Heart left ventricle (tissue), 16 donors: ENCODE measurements at regions of chr22 and their contacts with region 1.

Region 1: GRCh38 chr22:27804470-27805297 is 3.1 kb upstream of the MN1 start:
- DNase-seq: peak; percentile 71 to 82 (median 74)
- ATAC-seq: peak in 3 of 4 donors; percentile 57 to 68 (median 67)
- H3K4me3 ChIP-seq: no peak overlapping the region
- H3K27ac ChIP-seq: no peak overlapping the region
- H3K4me1 ChIP-seq: peaks cover 0 to 38% (median 16%) of the 10 kb centered on the region in 12 donors
- H3K27me3 ChIP-seq: peaks cover 0 to 28% (median 4%) of the 10 kb centered on the region in 9 donors
- CTCF ChIP-seq: peak; percentile 54 to 81 (median 75)
- POLR2A ChIP-seq: no peak

Region 2: DNA sequence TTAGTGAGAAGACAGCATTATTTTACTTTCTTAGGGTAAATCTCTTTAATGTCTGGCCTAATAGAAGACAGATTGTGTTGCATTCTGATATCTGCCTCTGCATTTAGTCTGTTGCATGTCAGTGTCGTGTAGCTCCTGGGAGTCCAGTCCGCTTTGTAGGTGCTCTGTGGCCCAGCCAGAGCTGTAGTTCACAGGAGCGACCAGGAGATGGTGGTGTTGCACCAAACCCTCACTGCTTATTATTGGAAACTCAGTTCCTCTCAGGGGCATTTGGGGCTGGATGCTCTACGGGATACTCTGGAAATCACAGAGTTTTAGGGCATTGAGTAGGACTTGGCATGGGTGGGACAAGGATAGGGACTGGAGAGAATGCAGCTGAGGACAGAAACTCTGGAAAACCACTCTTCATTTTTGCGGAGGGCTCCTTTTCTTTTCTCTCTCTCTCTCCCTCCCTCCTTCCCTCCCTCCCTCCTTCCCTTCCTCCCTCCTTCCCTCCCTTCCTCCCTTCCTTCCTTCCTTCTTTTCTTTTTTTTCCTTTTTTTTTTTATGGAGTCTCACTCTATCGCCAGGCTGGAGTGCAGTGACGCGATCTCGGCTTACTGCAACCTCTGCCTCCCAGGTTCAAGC is 1125.6 kb before region 1 on chr22:
- intact Hi-C with region 1: loop called in 6 of 10 experiments (anchors 5 to 10 kb)
- DNase-seq: peak; percentile 65 to 82 (median 67)
- ATAC-seq: peak; percentile 49 to 88 (median 80)
- H3K4me3 ChIP-seq: no peak overlapping the region
- H3K27ac ChIP-seq: no peak overlapping the region
- H3K4me1 ChIP-seq: peaks cover 0 to 30% (median 10%) of the 10 kb centered on the region in 12 donors
- H3K27me3 ChIP-seq: no peaks in the 10 kb centered on the region
- CTCF ChIP-seq: peak; percentile 88 to 98 (median 95)
- POLR2A ChIP-seq: no peak

Region 3: DNA sequence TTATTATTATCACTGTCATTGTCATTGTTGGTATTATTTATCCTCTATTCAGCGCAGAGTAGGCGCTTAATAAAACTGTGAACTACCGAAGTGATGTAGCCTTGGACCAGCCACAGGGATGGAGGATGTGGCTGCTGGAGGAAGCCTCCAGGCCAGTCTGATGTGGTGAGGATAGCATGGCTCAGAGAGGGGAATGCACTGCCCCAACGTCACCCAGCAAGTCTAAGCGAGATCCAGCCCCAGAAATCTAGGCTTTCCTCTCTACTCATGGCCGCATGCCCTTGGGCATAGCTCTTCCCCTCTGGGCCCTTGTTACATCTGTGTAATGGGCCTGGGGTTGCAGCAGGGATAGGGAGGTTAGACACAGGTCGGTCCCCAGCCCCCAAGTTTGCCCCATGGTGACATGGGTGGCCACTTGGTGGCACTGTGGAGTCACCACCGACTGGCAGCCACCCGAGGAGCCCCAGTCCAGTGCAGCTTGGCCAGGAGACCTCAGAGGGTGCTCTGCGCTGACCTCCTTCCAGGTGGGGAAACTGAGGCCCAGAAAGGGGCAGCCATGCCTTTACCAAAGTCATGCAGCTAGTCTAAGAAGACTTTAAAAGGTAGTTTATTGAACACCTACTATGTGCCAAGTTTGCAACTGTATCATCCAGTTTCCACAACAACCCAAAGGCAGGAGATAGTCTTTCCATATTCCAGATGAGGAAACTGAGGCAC is 398.9 kb before region 1 on chr22:
- intact Hi-C with region 1: loop called (anchors 1 to 5 kb)
- DNase-seq: peak; percentile 47 to 83 (median 62)
- ATAC-seq: peak; percentile 74 to 89 (median 82)
- H3K4me3 ChIP-seq: no peak overlapping the region
- H3K27ac ChIP-seq: no peak overlapping the region
- H3K4me1 ChIP-seq: peaks cover 0 to 9% (median 0%) of the 10 kb centered on the region in 12 donors
- H3K27me3 ChIP-seq: peaks cover 0 to 24% (median 0%) of the 10 kb centered on the region in 9 donors
- CTCF ChIP-seq: peak; percentile 64 to 81 (median 74)
- POLR2A ChIP-seq: no peak

Region 4: GRCh38 chr22:27512283-27512761 is 292.4 kb before region 1 on chr22:
- intact Hi-C with region 1: loop called in 2 of 10 experiments (anchors 5 to 10 kb)
- DNase-seq: peak; percentile 85 to 90 (median 87)
- ATAC-seq: peak; percentile 85 to 91 (median 88)
- H3K4me3 ChIP-seq: no peak overlapping the region
- H3K27ac ChIP-seq: peak overlapping the region; percentile 3 to 77 (median 64)
- H3K4me1 ChIP-seq: peaks cover 0 to 30% (median 8%) of the 10 kb centered on the region in 12 donors
- H3K27me3 ChIP-seq: no peaks in the 10 kb centered on the region
- CTCF ChIP-seq: no peak
- POLR2A ChIP-seq: no peak

Region 5: DNA sequence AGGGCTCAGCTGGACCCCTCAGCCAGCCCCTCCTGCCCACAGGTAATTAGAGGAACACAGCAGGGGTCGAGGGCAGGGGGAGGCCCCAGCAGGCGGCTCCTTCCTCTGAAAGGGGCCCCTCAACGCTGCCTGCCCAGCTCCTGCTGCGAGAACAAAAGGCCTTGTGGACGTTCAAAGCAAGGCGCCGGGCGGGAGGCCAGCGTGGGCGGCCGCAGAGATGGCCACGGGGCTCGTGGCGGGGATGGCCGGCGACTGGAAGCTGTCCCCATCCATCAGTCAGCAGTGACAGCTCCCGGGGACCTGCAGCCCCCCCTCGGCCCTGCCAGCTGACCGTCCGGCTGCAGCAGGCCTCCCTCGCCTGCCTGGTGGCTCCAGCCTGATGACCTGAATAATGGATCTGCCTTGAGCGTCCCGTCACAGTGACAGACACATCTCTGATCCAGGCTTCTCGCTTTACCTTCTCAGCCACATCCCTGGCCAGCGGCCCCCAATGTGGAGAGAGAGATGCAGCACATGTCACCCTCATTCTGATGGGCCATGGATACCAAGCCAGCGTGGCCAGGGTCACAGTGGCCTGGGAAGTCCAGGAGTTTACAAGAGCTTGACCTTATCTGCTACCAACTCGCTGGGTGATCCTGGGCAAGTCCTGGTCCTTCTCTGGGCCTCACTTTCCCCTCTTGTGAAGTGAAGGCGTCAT is 162.4 kb before region 1 on chr22:
- intact Hi-C with region 1: loop called in 8 of 10 experiments (anchors 5 to 10 kb)
- DNase-seq: no peak
- ATAC-seq: no peak
- H3K4me3 ChIP-seq: no peak overlapping the region
- H3K27ac ChIP-seq: peak overlapping the region in 1 of 12 donors; percentile 20
- H3K4me1 ChIP-seq: peaks cover 0 to 27% (median 7%) of the 10 kb centered on the region in 12 donors
- H3K27me3 ChIP-seq: no peaks in the 10 kb centered on the region
- CTCF ChIP-seq: no peak
- POLR2A ChIP-seq: no peak

Region 6: DNA sequence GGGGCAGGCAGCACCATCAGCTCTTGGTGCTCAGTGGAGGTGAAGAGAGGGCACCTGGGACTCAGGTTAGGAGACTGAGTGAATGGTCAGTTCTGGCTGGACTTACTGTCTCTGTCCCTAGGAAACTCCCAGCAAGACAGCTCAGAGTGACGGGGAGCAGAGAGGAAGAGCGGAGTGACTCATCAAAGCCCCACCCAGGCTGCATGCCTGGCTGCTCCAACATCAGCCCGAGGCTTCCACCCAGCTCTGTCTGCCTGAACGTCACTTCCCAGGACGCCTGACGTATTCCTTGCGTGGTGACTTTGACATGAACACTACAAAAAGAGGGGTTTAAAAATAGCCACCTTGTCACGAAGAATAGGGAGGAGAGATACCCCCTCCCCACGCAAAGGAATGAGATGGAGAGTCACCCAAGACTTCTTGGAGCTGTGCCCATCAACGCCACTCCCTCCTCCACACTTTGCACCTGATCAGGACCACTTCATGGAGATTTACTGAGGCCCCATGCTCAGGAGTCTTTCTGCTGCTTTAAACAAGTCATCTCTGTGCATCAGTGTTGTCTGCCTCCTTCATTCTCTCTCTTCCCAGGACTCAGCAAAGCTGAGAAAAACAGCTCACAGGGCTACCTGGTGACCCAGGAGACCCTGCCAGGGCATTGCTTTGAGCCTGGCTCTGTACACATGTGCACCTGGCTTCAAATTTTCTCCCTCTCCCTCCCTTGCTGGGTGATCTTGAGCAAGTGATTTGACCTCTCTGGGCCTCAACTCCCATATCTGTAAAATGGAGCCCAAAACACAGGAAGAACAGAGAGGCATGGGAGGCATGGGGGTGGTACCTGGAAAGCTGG is 86.3 kb before region 1 on chr22:
- intact Hi-C with region 1: loop called in 1 of 10 experiments (anchors 5 kb)
- DNase-seq: peak; percentile 79 to 88 (median 80)
- ATAC-seq: peak; percentile 89 to 96 (median 96)
- H3K4me3 ChIP-seq: peak overlapping the region in 1 of 12 donors; percentile 13
- H3K27ac ChIP-seq: peak overlapping the region in 11 of 12 donors; percentile 42 to 80 (median 59)
- H3K4me1 ChIP-seq: peaks cover 0 to 28% (median 19%) of the 10 kb centered on the region in 12 donors
- H3K27me3 ChIP-seq: no peaks in the 10 kb centered on the region
- CTCF ChIP-seq: no peak
- POLR2A ChIP-seq: peak in 1 of 2 donors; percentile 44